BJ (cell line): ENCODE measurements at regions of chr12 and their contacts with region 1.

Region 1: DNA sequence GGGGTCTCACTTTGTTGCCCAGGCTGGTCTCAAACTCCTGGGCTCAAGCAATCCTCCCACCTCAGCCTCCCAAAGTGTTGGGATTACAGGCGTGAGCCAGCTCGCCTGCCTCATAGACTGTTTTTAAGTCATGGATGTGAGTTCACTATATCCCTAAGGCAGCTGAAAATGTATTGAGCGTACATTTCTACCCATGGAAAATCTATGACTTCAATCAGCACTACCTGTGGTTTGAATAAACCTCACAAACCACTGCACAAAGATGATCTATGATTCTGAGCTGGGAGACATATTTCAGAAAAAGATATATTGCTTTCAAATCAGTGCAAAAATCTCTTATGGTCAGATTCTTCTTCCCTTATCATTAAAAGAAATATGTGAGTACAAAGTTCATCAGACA is 22.5 kb downstream of the GCN1 start:
- DNase-seq: no peak
- H3K4me3 ChIP-seq: no peak overlapping the region
- H3K27me3 ChIP-seq: no peaks in the 10 kb centered on the region
- CTCF ChIP-seq: no peak

Region 2: GRCh38 chr12:119710352-119710964 is 461.6 kb before region 1 on chr12:
- CTCF ChIA-PET with region 1: no interaction called
- POLR2A ChIA-PET with region 1: no interaction called
- DNase-seq: no peak
- H3K4me3 ChIP-seq: no peak overlapping the region
- H3K27me3 ChIP-seq: no peaks in the 10 kb centered on the region
- CTCF ChIP-seq: no peak

Region 3: GRCh38 chr12:120158351-120158750 is 13.7 kb before region 1 on chr12:
- CTCF ChIA-PET with region 1: no interaction called
- POLR2A ChIA-PET with region 1: no interaction called
- DNase-seq: no peak
- H3K4me3 ChIP-seq: no peak overlapping the region
- H3K27me3 ChIP-seq: no peaks in the 10 kb centered on the region
- CTCF ChIP-seq: no peak

Region 4: GRCh38 chr12:120181991-120182631 is 10.1 kb after region 1 on chr12:
- CTCF ChIA-PET with region 1: no interaction called
- POLR2A ChIA-PET with region 1: interaction called, 32 read pairs
- DNase-seq: no peak
- H3K4me3 ChIP-seq: no peak overlapping the region
- H3K27me3 ChIP-seq: no peaks in the 10 kb centered on the region
- CTCF ChIP-seq: no peak

Region 5: GRCh38 chr12:120249875-120250795 is 78.1 kb after region 1 on chr12:
- CTCF ChIA-PET with region 1: no interaction called
- POLR2A ChIA-PET with region 1: no interaction called
- DNase-seq: no peak
- H3K4me3 ChIP-seq: no peak overlapping the region
- H3K27me3 ChIP-seq: no peaks in the 10 kb centered on the region
- CTCF ChIP-seq: no peak

Region 6: GRCh38 chr12:120702637-120703036 is 530.6 kb after region 1 on chr12:
- CTCF ChIA-PET with region 1: no interaction called
- POLR2A ChIA-PET with region 1: no interaction called
- DNase-seq: no peak
- H3K4me3 ChIP-seq: no peak overlapping the region
- H3K27me3 ChIP-seq: no peaks in the 10 kb centered on the region
- CTCF ChIP-seq: no peak